Endothelial cell of umbilical vein (primary cell): ENCODE measurements at regions of chr6 and their contacts with region 1.

Region 1: DNA sequence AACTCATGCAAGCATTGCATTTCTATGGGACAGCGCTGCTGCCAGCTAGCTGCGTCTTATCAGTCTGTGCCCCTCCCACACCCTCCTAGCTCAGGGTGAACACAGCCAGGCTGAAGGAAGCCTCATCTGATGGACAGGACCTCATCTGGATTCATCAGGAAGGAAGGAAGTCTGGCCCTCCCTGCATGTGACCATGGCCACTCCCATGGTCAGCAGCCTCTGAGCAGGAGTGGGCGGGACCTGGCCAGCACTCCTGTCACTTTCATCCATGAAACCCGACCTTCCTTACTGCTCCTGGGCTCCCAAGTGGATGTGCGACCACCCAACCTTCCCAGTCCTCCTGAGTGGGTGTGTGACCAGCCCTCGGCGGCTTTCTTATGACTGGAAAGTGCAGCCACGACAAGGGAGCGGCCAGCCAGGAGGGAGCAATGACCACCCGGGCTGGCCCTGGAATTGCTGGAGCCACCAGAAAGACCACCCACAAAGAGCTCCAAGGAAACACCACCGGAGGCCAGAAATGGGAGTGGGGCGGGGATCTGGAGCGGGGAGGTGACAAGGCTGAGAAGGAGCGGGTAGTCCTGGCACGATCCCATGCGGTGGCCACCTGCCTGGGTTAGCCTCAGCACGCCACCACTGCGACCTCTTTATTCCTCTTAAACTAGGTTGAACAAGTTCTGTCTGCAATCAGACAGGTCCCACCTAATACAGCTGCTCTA is 241.2 kb downstream of the TTLL2 start:
- DNase-seq: no peak
- H3K4me3 ChIP-seq: no peak overlapping the region
- H3K27ac ChIP-seq: no peak overlapping the region
- H3K4me1 ChIP-seq: peaks cover 6% of the 10 kb centered on the region
- H3K27me3 ChIP-seq: no peaks in the 10 kb centered on the region
- CTCF ChIP-seq: no peak
- POLR2A ChIP-seq: no peak

Region 2: DNA sequence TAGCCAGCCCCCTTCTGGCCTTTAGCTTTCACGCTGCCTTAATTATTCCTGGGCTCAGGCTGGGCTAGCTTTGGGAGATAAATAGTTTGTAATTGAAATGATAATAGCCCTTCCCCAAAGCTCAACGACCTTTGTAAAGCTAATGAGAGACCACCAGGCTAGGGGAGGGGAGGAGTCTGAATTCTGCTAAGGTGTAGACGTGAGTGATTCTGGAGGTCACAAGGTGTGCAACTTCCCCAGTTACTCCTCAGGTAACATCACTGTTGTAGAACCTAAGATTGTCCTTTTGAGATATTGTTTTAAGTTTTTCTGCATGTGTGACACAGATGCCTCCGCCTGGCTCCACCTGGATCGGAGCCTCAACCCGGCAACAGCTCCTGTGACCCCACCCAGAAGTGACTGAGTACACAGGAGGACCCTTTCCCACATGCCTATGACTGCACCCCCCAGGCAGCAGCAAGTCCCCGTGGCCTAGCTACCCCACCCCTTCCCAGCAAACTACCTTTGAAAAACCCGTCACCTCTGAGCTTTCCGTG is 402.5 kb before region 1 on chr6:
- CTCF ChIA-PET with region 1: no interaction called
- POLR2A ChIA-PET with region 1: no interaction called
- dilution Hi-C with region 1: no loop called
- intact Hi-C with region 1: loop called (anchors 5 kb)
- DNase-seq: no peak
- H3K4me3 ChIP-seq: no peak overlapping the region
- H3K27ac ChIP-seq: no peak overlapping the region
- H3K4me1 ChIP-seq: no peaks in the 10 kb centered on the region
- H3K27me3 ChIP-seq: peaks cover 0 to 1% of the 10 kb centered on the region in 2 experiments
- CTCF ChIP-seq: no peak
- POLR2A ChIP-seq: no peak